Activated naive CD4-positive, alpha-beta T cell treated with anti-CD3 and anti-CD28 coated beads for 36 hours (primary cell): ENCODE measurements at regions of chr12 and their contacts with region 1.

Region 1: DNA sequence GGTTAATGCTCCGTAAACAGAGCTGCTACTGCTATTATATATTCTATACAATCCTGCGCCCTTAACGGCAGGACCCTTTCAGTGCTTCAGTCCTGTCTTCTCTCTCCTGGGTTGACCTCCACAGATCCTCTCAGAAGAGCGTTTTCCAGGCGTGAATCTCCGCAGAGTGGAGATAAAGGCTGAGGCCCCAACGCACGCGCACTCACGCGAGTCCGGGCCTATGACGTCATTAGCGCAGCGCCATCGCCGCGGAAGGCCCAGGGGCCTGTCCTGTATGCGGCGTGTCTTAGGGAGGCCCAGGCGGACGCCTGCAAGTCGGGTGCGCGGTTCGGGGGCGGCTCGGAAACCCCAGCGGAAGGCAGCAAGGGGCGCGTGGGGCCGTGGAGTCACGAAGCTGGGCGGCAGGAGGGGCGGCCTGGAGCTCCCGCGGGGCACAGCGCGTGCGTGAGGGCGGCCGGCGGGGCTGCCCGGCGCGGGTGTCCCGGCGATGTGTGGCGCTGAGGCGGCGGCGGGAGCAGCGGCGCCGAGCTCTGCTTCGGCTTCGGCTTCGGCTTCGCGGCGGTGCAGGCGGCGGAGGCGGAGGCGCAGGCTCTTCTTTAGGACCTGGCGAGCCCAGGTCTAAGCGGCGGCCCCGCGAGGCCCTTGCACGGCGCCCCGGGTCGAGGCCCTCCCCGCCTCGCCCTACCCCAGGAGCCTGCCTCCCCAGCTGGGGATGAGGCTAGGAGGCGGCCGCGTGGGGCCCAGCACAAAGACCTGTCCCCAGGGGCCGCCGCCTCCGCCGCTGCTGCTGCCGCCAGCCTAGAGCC is at the start of gene MAPKAPK5:
- DNase-seq: peak; percentile 97
- H3K4me3 Mint-ChIP-seq: peak within 1 kb of the TSS; percentile 91
- H3K27ac Mint-ChIP-seq: peak within 1 kb of the TSS; percentile 95
- H3K4me1 Mint-ChIP-seq: peaks cover 54% of the 10 kb centered on the region
- H3K27me3 Mint-ChIP-seq: no peaks in the 10 kb centered on the region
- total RNA-seq, gene MAPKAPK5: 41.9 to 43.6 TPM

Region 2: DNA sequence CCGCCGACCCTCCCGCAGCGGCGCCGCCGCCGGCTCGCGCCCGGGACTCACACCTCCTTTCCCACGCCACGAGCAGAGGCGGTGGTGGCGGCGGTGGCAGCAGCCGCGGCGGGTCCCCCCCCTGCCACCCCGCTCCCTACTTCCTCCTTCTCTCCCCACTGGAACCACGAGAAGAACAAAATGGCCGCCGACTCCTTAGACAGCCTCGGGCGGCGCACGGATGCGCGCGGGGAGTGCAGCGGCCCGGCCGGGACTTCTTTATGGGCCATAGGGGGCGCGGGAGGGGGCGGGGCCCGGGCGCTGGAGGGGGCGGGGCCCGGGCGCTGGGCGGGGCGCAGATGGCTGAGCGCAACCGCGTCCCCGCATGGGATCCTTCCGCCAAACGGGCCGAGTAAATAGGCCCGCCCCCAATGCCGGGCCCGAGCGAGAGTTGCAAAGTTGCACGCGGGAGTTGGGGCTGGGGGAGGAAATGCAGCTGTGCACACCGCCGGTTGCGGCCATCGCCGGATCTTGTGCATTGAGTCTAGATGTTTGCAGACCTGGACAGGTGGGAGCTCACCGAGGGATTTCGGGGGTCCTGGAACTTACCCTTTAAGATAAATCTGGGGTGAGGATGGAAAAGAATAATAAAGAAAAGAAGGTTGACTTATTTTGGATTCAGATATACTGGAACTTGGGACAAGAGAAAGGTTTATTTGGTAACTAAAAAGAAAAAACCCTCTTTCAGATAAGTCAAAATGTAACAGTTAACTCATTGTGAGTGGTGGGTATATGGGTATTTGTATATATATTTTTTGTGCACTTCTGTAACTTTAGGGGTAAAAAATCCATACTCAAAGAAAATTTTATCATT is 1099.0 kb before region 1 on chr12 and contains the start of gene PPP1CC:
- CTCF ChIA-PET with region 1: no interaction called
- intact Hi-C with region 1: loop called (anchors 10 kb)
- DNase-seq: peak; percentile 93
- H3K4me3 Mint-ChIP-seq: peak within 1 kb of the TSS; percentile 99
- H3K27ac Mint-ChIP-seq: peak within 1 kb of the TSS; percentile 98
- H3K4me1 Mint-ChIP-seq: peaks cover 37% of the 10 kb centered on the region
- H3K27me3 Mint-ChIP-seq: no peaks in the 10 kb centered on the region
- total RNA-seq, gene PPP1CC: 280 to 285 TPM

Region 3: GRCh38 chr12:111599459-111600204 is 242.3 kb before region 1 on chr12:
- CTCF ChIA-PET with region 1: no interaction called
- intact Hi-C with region 1: loop called (anchors 1 kb)
- DNase-seq: peak; percentile 83
- H3K4me3 Mint-ChIP-seq: peak overlapping the region; percentile 83
- H3K27ac Mint-ChIP-seq: peak overlapping the region; percentile 85
- H3K4me1 Mint-ChIP-seq: peaks cover 25% of the 10 kb centered on the region
- H3K27me3 Mint-ChIP-seq: no peaks in the 10 kb centered on the region

Region 4: DNA sequence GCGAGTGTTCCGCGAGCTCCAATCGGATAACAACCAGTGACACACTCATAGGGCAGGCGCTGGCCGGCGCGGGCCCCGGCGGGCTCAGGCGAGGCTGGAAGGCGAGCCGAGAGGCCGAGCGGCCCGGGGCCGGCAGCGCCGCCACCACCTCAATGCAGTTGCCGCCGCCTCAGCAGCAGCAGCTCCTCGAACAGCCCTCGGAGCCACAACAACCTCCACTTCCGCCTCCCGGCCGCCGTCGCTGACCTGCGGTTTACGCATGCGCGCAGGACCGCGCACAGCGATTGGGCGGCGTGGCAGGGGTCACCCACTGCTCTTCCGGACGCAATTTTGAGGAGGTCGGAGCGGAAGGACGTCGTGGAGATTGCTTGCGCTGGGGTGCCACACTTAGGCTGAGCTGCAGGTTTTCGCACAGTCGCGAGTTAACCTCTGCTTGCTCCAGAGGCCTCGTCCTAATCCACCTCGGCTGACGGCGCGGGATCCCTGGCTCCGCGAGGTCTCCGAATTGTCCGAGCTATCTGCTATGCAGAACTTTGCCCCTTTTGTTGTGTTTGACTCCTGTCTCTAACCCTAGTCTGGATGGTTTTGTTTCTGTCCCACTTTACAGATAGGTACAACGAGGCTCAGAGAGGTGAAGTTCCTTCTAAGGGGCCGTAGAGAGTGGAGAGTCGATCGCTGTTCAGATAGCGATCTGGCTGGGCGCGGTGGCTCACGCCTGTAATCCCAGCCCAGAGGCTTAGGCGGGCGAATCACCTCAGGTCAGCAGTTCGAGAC is 156.0 kb before region 1 on chr12 and contains the starts of genes ACAD10 and BRAP:
- CTCF ChIA-PET with region 1: no interaction called
- intact Hi-C with region 1: loop called (anchors 1 kb)
- DNase-seq: peak; percentile 94
- H3K4me3 Mint-ChIP-seq: peak within 1 kb of the TSS; percentile 91
- H3K27ac Mint-ChIP-seq: peak within 1 kb of the TSS; percentile 86
- H3K4me1 Mint-ChIP-seq: peaks cover 33% of the 10 kb centered on the region
- H3K27me3 Mint-ChIP-seq: no peaks in the 10 kb centered on the region
- total RNA-seq, gene ACAD10: 19.0 to 21.7 TPM
- total RNA-seq, gene BRAP: 14.7 to 16.9 TPM

Region 5: DNA sequence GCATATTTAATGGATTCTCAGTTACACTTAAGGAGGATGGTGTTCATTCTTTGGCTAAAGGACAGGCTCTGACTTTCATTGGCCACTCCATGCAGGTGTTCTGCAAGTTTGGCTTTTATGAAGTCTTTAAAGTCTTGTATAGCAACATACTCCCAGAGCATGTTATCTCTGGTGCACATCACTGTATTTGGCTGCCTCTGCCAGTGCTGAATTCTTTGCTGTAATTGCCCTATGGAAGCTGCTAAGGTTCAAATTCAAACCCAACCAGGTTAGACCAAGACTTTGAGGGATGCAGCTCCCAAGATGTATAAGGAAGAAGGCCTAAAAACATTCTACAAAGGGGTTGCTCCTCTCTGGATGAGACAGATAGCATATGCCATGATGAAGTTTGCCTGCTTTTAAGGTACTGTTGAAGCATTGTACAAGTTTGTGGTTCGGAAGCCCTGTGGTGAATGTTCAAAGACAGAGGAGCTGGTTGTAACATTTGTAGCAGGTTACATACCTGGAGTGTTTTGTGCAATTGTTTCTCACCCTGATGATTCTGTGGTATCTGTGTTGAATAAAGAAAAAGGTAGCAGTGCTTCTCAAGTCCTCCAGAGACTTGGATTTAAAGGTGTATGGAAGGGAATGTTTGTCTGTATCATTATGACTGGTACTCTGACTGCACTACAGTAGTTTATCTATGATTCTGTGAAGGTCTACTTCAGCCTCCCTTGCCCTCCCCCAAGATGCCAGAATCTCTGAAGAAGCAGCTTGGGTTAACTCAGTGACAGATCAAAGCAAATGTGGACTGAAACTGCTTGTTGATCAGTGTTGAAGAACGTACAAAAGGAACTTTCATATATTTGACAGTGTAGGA is 151.6 kb after region 1 on chr12:
- CTCF ChIA-PET with region 1: no interaction called
- intact Hi-C with region 1: loop called (anchors 5 kb)
- DNase-seq: peak; percentile 42
- H3K4me3 Mint-ChIP-seq: peak overlapping the region; percentile 72
- H3K27ac Mint-ChIP-seq: peak overlapping the region; percentile 31
- H3K4me1 Mint-ChIP-seq: peaks cover 60% of the 10 kb centered on the region
- H3K27me3 Mint-ChIP-seq: no peaks in the 10 kb centered on the region

Region 6: DNA sequence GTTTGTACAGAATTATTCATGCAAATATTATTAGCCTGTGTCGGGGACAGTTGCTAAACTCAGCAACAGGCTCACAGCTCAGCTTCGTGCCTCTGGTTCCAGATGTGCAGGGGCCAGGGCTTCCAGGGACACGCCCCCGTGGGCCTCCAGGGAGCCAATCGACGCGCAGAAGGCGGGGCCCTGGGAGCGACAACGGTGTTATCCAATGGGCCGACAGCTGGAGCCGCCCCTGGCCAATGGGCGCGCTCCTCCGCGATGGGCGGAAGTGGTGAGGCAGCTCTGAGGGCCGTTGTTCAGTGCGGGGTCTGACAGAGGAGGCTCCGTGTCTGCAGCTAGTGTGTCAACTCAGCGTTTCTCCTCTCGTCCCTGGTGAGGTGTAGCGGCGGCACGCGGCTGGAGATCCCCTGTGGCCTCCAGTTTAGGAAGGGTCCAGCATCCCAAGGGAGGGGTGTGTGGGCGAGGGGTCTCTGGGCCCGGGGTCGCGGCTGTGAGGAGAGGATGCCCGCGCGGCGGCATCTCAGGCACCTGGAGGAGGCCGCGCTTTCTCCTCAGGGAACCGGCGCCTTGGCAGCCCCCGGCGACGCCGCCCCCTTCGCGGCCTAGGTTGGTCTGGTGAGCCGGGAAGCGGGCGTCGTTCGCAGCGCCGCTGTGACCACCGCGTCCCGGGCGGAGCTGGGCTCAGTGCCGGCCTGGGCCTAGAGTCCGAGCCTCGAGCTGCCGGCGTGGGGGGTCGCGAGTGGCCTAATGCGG is 283.5 kb after region 1 on chr12 and contains the start of gene TRAFD1:
- CTCF ChIA-PET with region 1: no interaction called
- intact Hi-C with region 1: loop called (anchors 5 kb)
- DNase-seq: peak; percentile 98
- H3K4me3 Mint-ChIP-seq: peak within 1 kb of the TSS; percentile 72
- H3K27ac Mint-ChIP-seq: peak within 1 kb of the TSS; percentile 75
- H3K4me1 Mint-ChIP-seq: peaks cover 42% of the 10 kb centered on the region
- H3K27me3 Mint-ChIP-seq: no peaks in the 10 kb centered on the region
- total RNA-seq, gene TRAFD1: 49.6 to 55.7 TPM